ENCODE measurements at regions of chr14 and their contacts with region 1.

Region 1: GRCh38 chr14:52961060-52961639 is 10.3 kb upstream of the FERMT2 start:
- DNase-seq: peak; percentile 74

Region 2: DNA sequence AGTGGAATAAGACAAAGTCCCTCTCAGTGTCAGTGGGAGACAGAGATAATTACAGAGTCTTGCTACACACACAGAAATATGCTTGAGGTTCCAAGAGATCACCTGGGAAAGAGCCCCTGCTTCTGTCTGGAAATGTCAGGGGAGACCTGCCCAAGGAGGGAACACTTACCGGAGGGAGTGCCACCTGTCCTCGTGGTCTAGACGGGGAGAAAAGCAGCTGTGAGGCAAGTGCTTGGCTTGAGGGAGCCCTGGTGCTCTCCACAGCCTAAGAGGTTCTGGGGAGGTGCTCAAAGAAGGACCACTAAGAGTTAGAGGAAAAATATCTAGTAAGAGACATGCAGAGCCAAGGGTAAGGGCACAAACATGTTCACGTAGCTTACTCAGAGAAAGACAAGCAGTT is 131.6 kb before region 1 on chr14:
- CTCF ChIA-PET with region 1: interaction called, 11 read pairs
- POLR2A ChIA-PET with region 1: interaction called, 3 read pairs
- DNase-seq: no peak

Region 3: GRCh38 chr14:53093206-53093605 is 132.1 kb after region 1 on chr14:
- CTCF ChIA-PET with region 1: no interaction called
- POLR2A ChIA-PET with region 1: no interaction called
- DNase-seq: no peak